MCF 10A (cell line): ENCODE measurements at regions of chr2 and their contacts with region 1.

Region 1: DNA sequence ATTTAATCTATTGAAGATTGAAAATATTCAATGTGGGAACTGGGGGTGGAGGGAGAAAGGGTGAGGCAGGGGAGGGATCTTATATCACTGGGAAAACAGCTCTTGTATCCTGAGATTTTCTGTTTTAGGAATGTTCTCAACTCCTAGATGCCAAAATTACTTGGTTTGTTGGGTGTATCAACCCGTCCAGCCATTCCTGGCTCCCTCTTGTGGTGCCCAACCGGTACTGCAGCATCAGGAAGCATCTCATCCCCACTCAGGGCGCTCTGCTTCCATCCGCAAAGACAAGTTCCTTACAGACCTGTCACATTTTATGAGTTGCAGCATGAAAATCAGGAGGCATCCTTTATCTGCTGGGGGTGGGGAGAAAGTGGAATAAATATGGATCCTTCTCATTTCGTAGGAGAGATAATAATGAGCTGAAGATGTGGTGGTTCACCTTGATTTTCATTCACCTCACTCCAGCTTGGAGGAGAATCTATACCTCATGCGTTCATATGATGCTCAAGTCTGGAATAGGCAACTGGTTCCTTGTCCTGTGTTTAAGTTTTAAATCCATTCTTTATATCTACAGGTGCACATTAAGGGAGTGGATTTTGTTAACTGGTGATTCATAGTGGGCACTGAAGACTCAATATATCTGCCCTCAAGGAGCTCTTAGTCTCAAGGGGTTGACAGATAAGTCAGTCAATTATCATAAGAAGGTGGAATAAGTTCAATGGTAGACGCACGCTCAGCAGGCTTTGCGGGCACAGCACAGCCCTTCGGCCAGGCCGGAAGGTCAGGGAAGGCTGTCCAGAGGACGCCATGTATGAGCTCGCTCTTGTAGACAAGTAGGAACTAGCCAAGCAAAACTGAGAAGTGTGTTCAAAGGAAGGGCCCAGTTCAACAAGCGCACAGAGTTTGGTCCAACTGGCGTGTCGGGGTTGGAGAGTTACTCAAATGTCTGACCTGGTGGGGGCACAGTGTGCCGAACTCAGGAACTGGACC is 127.3 kb downstream of the RNF144A start:
- DNase-seq: peak; percentile 67
- H3K4me3 Mint-ChIP-seq: no peak overlapping the region
- H3K27ac Mint-ChIP-seq: no peak overlapping the region
- H3K4me1 Mint-ChIP-seq: no peaks in the 10 kb centered on the region
- H3K27me3 Mint-ChIP-seq: peaks cover 79% of the 10 kb centered on the region
- CTCF ChIP-seq: peak; percentile 81

Region 2: DNA sequence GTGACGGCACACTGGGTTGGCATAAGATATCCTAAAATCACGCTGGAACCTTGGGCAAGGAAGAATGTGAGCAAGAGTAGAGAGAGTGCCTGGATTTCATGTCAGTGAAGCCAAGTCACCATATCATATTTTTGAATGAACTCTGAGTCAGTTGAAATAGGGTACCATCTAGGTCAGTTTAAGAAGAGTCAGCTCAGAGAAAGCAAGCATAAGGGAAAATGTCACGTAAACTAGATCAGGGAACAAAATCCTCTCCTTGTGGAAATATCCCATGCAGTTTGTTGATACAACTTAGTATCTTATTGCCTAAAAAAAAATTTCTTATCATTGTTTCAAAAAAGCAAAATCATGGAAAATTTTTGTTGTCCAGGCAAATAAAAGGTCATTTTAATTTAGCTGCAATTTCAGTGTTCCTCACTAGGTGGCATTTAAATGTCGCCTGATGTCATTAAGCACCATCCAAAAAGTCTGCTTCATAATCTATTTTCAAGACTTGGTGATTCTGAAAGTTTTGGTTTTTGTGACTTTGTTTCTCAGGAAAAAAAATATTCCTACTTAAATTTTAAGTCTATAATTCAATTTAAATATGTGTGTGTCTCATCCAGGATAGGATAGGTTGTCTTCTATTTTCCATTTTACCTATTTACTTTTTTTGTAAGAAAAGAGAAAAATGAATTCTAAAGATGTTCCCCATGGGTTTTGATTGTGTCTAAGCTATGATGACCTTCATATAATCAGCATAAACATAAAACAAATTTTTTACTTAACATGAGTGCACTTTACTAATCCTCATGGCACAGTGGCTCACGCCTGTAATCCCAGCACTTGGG is 147.4 kb before region 1 on chr2:
- CTCF ChIA-PET with region 1: interaction called, 96 read pairs
- POLR2A ChIA-PET with region 1: no interaction called
- intact Hi-C with region 1: loop called (anchors 1 kb)
- DNase-seq: peak; percentile 46
- H3K4me3 Mint-ChIP-seq: no peak overlapping the region
- H3K27ac Mint-ChIP-seq: no peak overlapping the region
- H3K4me1 Mint-ChIP-seq: no peaks in the 10 kb centered on the region
- H3K27me3 Mint-ChIP-seq: peaks cover 68% of the 10 kb centered on the region
- CTCF ChIP-seq: peak; percentile 33

Region 3: DNA sequence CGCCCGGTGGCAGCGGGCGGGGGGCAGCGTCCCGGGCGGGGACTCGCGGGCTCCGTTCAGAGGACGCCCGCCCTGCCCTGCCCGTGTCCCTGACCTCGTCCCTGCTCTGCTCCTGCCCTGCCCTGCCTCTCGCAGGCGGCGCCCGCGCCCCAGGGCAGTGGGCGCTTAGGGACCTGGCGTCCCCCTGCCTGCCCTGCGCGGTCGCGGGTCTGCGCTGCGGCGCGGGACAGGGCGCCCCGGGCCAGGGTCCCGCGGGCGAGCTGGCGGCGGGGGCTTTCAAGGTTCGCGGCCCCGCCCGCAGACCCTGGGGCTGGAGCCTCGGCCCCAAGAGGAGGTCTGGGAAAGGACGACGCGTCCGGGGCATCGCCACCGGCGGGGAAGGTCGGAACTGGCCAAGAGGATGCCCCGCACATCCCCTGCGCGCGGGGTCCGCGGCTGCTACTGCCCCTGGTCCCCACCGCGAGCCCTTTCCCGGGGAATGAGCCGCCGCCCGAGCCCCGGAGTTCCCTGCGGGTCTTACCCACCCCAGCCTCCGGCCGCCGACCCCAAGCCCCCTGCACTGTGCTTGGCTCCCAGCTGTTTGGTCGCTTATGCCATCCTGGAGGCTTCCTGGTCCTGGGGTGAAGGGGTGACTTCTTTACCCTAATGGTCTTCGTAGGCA is 126.7 kb before region 1 on chr2:
- CTCF ChIA-PET with region 1: interaction called, 22 read pairs
- POLR2A ChIA-PET with region 1: no interaction called
- intact Hi-C with region 1: no loop called
- DNase-seq: no peak
- H3K4me3 Mint-ChIP-seq: no peak overlapping the region
- H3K27ac Mint-ChIP-seq: no peak overlapping the region
- H3K4me1 Mint-ChIP-seq: no peaks in the 10 kb centered on the region
- H3K27me3 Mint-ChIP-seq: peaks cover under 1% of the 10 kb centered on the region
- CTCF ChIP-seq: no peak

Region 4: DNA sequence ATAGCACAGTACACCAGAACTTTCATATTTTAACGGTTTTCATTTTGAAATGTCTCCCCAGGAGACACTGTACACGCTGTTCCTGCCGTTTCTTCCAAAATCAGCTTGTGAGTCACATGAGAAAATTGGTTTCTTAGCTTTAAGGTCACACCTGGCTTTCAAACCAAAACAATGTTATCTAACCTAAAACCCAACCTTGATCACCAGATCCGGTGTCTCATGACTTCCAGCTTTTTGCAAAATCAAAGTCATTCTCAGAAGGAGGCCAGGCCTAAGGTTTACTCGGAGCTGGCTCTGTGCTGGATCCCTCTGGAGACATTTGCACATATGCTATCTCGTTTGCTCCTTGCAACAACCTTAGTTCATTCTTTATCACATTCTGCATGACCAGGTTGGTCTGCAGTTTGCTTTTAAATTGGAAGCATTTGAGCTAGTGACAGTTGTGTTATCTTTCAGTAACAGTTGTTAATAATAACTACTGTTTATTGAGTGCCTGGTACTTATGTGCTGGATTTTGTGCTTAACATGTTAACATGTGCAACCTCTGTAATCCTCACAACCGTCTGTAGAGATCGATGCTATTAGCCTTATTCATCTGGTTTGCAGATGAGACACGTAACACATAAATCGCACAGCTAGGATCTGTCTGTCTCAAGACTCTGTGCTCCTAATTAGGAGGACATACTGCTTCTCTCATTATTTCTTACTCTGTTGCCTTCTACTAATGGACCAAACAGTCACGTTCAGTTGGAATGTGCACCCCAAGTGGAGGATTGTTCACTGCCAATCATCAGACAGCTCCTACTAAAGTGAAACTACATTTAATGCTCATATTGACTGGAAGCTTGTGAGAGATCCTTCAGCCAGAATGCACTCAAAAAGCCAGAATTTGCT is 21.8 kb before region 1 on chr2:
- CTCF ChIA-PET with region 1: interaction called, 12 read pairs
- POLR2A ChIA-PET with region 1: no interaction called
- intact Hi-C with region 1: no loop called
- DNase-seq: peak; percentile 30
- H3K4me3 Mint-ChIP-seq: no peak overlapping the region
- H3K27ac Mint-ChIP-seq: no peak overlapping the region
- H3K4me1 Mint-ChIP-seq: peaks cover 19% of the 10 kb centered on the region
- H3K27me3 Mint-ChIP-seq: peaks cover 20% of the 10 kb centered on the region
- CTCF ChIP-seq: no peak

Region 5: GRCh38 chr2:7057865-7058400 is 13.4 kb after region 1 on chr2:
- CTCF ChIA-PET with region 1: interaction called, 25 read pairs
- POLR2A ChIA-PET with region 1: no interaction called
- intact Hi-C with region 1: no loop called
- DNase-seq: no peak
- H3K4me3 Mint-ChIP-seq: no peak overlapping the region
- H3K27ac Mint-ChIP-seq: no peak overlapping the region
- H3K4me1 Mint-ChIP-seq: no peaks in the 10 kb centered on the region
- H3K27me3 Mint-ChIP-seq: peaks cover 20% of the 10 kb centered on the region
- CTCF ChIP-seq: no peak